Psoas muscle (tissue), 8 donors: ENCODE measurements at regions of chr20 and their contacts with region 1.

Region 1: GRCh38 chr20:55333798-55334197 is 671.5 kb downstream of the CBLN4 start:
- DNase-seq: no peak
- ATAC-seq: no peak
- H3K4me3 ChIP-seq: no peak overlapping the region
- H3K27ac ChIP-seq: no peak overlapping the region
- H3K4me1 ChIP-seq: no peaks in the 10 kb centered on the region
- H3K27me3 ChIP-seq: no peaks in the 10 kb centered on the region
- CTCF ChIP-seq: no peak

Region 2: GRCh38 chr20:55375920-55376319 is 42.1 kb after region 1 on chr20:
- intact Hi-C with region 1: no loop called
- DNase-seq: no peak
- ATAC-seq: no peak
- H3K4me3 ChIP-seq: no peak overlapping the region
- H3K27ac ChIP-seq: no peak overlapping the region
- H3K4me1 ChIP-seq: no peaks in the 10 kb centered on the region
- H3K27me3 ChIP-seq: peaks cover 0 to 1% (median 0%) of the 10 kb centered on the region in 3 donors
- CTCF ChIP-seq: no peak

Region 3: DNA sequence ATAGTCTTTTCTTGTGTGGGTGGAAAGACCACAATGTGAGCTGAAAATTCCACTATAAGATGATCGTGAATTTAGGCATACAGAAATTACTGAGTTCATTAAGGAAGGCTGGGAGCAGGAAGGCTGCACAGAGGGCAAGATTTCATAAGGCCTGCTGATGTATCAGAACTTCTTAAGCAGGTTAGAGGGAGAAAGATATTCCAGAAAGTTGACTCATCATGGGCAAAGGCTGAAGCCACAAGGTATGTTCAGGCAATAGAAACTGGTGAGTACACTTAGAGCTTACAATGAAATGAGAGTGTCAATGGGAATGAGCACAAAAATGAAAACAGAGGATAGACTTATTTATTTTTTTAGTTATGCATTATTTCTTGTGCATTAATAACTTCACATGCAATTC is 52.9 kb after region 1 on chr20:
- intact Hi-C with region 1: loop called in 1 of 2 experiments (anchors 5 kb)
- DNase-seq: no peak
- ATAC-seq: no peak
- H3K4me3 ChIP-seq: no peak overlapping the region
- H3K27ac ChIP-seq: no peak overlapping the region
- H3K4me1 ChIP-seq: no peaks in the 10 kb centered on the region
- H3K27me3 ChIP-seq: no peaks in the 10 kb centered on the region
- CTCF ChIP-seq: no peak